Activated CD8-positive, alpha-beta T cell treated with anti-CD3 and anti-CD28 coated beads for 36 hours (primary cell): ENCODE measurements at regions of chr13 and their contacts with region 1.

Region 1: GRCh38 chr13:32581177-32581786 is 5.0 kb upstream of the PDS5B start:
- DNase-seq: no peak
- ATAC-seq: no peak
- H3K4me3 Mint-ChIP-seq: no peak overlapping the region
- H3K27ac Mint-ChIP-seq: no peak overlapping the region
- H3K4me1 Mint-ChIP-seq: peaks cover 9% of the 10 kb centered on the region
- H3K27me3 Mint-ChIP-seq: peaks cover 3% of the 10 kb centered on the region
- CTCF ChIP-seq: peak; percentile 84

Region 2: DNA sequence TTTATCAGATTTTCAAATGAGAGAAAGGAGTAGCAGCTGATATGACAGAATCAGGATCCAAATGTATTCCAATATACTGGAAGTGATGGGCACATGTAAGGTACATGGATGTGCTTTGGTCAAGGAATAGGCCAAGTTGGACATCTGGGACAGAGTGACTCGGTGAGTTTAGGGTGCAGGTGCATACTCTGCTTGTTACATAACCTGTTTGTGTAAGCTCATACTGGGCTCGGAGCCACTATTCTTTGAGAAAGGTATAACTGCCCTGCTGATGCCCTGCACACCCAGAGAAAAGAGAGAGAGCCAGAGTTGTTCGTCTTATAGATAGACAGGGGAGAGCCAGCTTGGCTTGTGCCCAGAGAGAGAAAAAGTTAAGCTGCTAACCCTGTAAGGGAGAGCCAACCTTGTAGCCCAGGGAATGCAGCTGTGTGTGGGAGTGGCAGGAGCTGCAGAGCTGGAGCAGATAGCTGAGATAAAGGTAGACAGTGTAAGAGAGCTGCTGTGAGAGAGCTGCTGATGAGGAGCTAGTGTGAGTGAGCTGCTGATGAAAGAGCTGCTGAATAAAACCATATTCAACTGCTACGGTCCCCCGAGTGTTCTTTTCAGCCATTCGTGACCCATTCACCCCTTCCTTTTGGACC is 112.7 kb before region 1 on chr13:
- CTCF ChIA-PET with region 1: interaction called, 22 read pairs
- POLR2A ChIA-PET with region 1: no interaction called
- intact Hi-C with region 1: loop called (anchors 5 kb)
- DNase-seq: no peak
- ATAC-seq: no peak
- H3K4me3 Mint-ChIP-seq: no peak overlapping the region
- H3K27ac Mint-ChIP-seq: no peak overlapping the region
- H3K4me1 Mint-ChIP-seq: peaks cover 9% of the 10 kb centered on the region
- H3K27me3 Mint-ChIP-seq: no peaks in the 10 kb centered on the region
- CTCF ChIP-seq: no peak

Region 3: DNA sequence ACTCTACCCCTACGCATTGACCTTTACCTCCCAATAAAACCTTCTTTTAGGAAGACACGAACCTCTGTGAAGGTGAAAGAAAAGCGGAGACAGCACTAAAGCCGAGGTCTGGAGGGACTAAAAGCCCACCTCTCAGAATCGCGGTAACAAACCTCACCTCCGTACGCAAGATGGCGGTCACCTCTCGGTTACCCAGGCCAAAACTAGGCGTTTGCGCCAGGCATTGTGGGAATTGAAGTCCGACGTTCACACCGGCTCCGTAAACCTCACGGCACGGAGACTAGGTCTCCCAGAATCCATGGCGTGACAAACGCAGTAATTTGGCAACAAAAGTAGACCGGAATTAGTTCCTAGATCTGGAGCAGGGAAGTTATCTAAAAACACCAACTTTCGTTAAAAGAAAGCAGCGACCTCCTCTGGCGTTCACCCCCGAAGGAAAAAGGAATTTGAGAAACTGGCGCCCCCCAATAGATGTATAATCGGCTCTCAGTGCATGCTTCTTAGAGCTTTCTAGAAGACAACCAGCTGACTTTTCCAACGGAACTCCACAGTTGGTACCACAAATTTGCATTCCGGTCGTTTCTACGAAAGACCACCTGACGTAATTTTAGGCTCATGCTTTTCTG is 42.5 kb before region 1 on chr13 and contains the start of gene N4BP2L2:
- CTCF ChIA-PET with region 1: interaction called, 6 read pairs
- POLR2A ChIA-PET with region 1: no interaction called
- intact Hi-C with region 1: loop called (anchors 5 kb)
- DNase-seq: peak; percentile 95
- ATAC-seq: peak; percentile 97
- H3K4me3 Mint-ChIP-seq: peak within 1 kb of the TSS; percentile 99
- H3K27ac Mint-ChIP-seq: peak within 1 kb of the TSS; percentile 99
- H3K4me1 Mint-ChIP-seq: peaks cover 38% of the 10 kb centered on the region
- H3K27me3 Mint-ChIP-seq: no peaks in the 10 kb centered on the region
- CTCF ChIP-seq: no peak
- total RNA-seq, gene N4BP2L2: 84.5 to 85.2 TPM

Region 4: GRCh38 chr13:33610471-33611015 is 1029.3 kb after region 1 on chr13:
- CTCF ChIA-PET with region 1: no interaction called
- POLR2A ChIA-PET with region 1: no interaction called
- intact Hi-C with region 1: no loop called
- DNase-seq: peak; percentile 73
- ATAC-seq: peak; percentile 61
- H3K4me3 Mint-ChIP-seq: peak overlapping the region; percentile 67
- H3K27ac Mint-ChIP-seq: peak overlapping the region; percentile 85
- H3K4me1 Mint-ChIP-seq: peaks cover 34% of the 10 kb centered on the region
- H3K27me3 Mint-ChIP-seq: peaks cover 7% of the 10 kb centered on the region
- CTCF ChIP-seq: no peak